Sigmoid colon (tissue), 7 donors: ENCODE measurements at regions of chr1 and their contacts with region 1.

Region 1: GRCh38 chr1:231528172-231529029 is at the start of gene TSNAX:
- DNase-seq: peak; percentile 95
- H3K4me3 ChIP-seq: peak within 1 kb of the TSS; percentile 64 to 71 (median 67)
- H3K27ac ChIP-seq: peak within 1 kb of the TSS; percentile 89 to 93 (median 92)
- H3K4me1 ChIP-seq: peaks cover 0 to 45% (median 34%) of the 10 kb centered on the region in 4 donors
- H3K27me3 ChIP-seq: no peaks in the 10 kb centered on the region
- CTCF ChIP-seq: no peak
- EP300 ChIP-seq: peak in 1 of 4 donors; percentile 5
- POLR2A ChIP-seq: peak; percentile 91 to 95
- total RNA-seq, gene TSNAX: 22.4 to 37.5 (median 30.3) TPM

Region 2: GRCh38 chr1:230867903-230868735 is 660.3 kb before region 1 on chr1 and contains the start of gene C1orf198:
- intact Hi-C with region 1: loop called (anchors 5 kb)
- DNase-seq: peak; percentile 82
- H3K4me3 ChIP-seq: peak within 1 kb of the TSS; percentile 90 to 96 (median 92)
- H3K27ac ChIP-seq: peak within 1 kb of the TSS; percentile 90 to 95 (median 93)
- H3K4me1 ChIP-seq: peaks cover 0 to 54% (median 49%) of the 10 kb centered on the region in 4 donors
- H3K27me3 ChIP-seq: no peaks in the 10 kb centered on the region
- CTCF ChIP-seq: no peak
- EP300 ChIP-seq: no peak
- POLR2A ChIP-seq: peak; percentile 28 to 32
- total RNA-seq, gene C1orf198: 42.1 to 63.5 (median 55.5) TPM

Region 3: GRCh38 chr1:231337472-231338269 is 190.7 kb before region 1 on chr1 and contains the start of gene EXOC8:
- intact Hi-C with region 1: loop called (anchors 5 kb)
- DNase-seq: peak; percentile 97
- H3K4me3 ChIP-seq: peak within 1 kb of the TSS; percentile 69 to 94 (median 81)
- H3K27ac ChIP-seq: peak within 1 kb of the TSS; percentile 88 to 96 (median 92)
- H3K4me1 ChIP-seq: peaks cover 0 to 60% (median 52%) of the 10 kb centered on the region in 4 donors
- H3K27me3 ChIP-seq: no peaks in the 10 kb centered on the region
- CTCF ChIP-seq: no peak
- EP300 ChIP-seq: no peak
- POLR2A ChIP-seq: peak; percentile 86 to 87
- total RNA-seq, gene EXOC8: 9.5 to 11.7 (median 11.3) TPM

Region 4: GRCh38 chr1:231421993-231422764 is 106.2 kb before region 1 on chr1 and contains the start of gene EGLN1:
- intact Hi-C with region 1: loop called (anchors 2 kb)
- DNase-seq: peak; percentile 91
- H3K4me3 ChIP-seq: peak within 1 kb of the TSS; percentile 66 to 90 (median 88)
- H3K27ac ChIP-seq: peak within 1 kb of the TSS; percentile 98 to 99 (median 98)
- H3K4me1 ChIP-seq: peaks cover 0 to 43% (median 36%) of the 10 kb centered on the region in 4 donors
- H3K27me3 ChIP-seq: no peaks in the 10 kb centered on the region
- CTCF ChIP-seq: no peak
- EP300 ChIP-seq: no peak
- POLR2A ChIP-seq: peak; percentile 50 to 61
- total RNA-seq, gene EGLN1: 37.8 to 51.7 (median 46.0) TPM

Region 5: DNA sequence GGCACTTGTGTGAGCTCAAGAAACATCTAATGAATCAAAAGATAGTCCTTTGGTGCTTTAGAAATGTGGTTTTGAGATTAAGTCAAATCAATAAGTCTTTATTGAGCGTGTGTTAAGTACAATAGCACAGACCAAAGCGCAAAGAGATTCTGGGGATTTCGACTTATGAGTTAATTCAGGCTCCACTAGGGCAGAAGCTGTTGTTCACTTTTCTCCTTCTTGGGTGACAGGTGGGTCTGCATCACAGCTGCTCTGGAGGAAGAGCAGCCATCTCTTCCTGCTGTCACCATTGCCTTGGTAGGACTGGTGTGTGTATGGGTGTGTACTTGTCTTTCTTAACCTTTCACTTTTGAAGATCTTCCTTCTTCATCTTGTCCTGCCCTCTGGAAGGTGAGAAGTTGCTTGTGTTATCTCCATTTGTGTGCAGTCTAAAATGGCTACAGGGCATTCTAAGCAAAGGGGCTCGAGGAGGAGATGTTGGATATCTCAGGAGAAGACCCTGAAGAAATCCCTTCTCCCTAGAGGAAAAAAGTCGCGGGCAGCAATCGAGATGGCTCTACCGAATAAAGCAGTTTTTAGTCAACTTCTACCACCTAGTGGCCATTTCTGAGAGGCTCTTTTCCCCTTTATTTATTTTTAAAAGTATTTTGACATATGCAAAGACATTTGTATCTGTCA is 75.3 kb after region 1 on chr1:
- intact Hi-C with region 1: loop called (anchors 5 kb)
- DNase-seq: no peak
- H3K4me3 ChIP-seq: peak overlapping the region; percentile 32 to 47 (median 42)
- H3K27ac ChIP-seq: peak overlapping the region in 3 of 4 donors; percentile 15 to 65 (median 22)
- H3K4me1 ChIP-seq: peaks cover 0 to 35% (median 33%) of the 10 kb centered on the region in 4 donors
- H3K27me3 ChIP-seq: no peaks in the 10 kb centered on the region
- CTCF ChIP-seq: peak; percentile 35 to 78 (median 60)
- EP300 ChIP-seq: no peak
- POLR2A ChIP-seq: no peak